HepG2 (cell line): ENCODE measurements at regions of chr6 and their contacts with region 1.

Region 1: DNA sequence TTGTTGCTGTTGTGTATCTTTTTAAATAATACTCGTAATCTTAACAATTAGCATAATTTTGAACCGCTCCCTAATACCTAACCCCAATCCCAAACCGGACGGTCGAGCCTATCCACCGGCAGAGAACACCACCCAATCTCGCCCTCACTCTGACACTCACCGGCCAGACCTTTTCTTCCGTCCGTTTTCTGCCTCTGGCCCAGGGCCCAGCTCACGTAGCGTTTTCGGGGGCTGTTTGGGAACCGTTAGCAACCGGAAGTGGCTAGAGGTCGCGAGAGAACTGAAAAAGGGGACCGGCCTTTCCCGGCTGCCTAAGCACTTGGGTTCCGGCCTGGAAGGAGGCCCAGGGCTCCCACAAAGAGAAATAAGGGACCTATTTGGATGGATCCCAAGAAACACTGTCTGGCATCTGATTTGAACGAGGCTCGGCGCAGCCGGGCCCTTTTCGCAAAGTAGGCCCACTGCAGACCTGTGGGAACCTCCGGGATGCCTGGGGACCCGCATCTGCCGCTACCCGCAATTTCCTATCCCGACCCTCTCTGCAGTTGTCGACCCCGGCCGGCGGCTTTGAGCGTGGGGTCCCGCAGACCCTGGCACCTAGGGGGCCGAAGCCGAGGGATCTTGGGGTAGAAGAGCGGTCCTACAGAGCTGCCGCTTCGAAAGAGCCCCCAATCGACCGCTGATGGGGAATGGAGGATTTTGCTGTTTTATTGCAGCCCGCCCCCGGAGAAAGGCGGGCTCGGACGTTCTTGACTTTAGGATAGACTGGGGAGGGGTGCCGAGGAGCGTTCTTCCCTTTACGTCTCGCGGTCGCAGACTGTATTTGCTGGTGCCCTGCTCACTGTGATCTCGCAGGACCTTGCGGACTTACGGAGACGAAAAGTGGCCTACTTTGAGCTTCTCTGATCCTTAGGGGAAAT is 4.8 kb upstream of the ZKSCAN8 start:
- DNase-seq: peak; percentile 94
- ATAC-seq: peak; percentile 84
- H3K4me3 ChIP-seq: peak overlapping the region; percentile 81 to 91 (median 86)
- H3K27ac ChIP-seq: peak overlapping the region; percentile 82
- H3K4me1 ChIP-seq: peaks cover 54% of the 10 kb centered on the region
- H3K27me3 ChIP-seq: no peaks in the 10 kb centered on the region; a peak in 1 of 5 replicates
- CTCF ChIP-seq: peak; percentile 37
- EP300 ChIP-seq: peak in 1 of 2 experiments; percentile 56; a peak in 3 of 4 replicates
- POLR2A ChIP-seq: peak; percentile 83 to 84
- RAD21 ChIP-seq: peak; percentile 63

Region 2: DNA sequence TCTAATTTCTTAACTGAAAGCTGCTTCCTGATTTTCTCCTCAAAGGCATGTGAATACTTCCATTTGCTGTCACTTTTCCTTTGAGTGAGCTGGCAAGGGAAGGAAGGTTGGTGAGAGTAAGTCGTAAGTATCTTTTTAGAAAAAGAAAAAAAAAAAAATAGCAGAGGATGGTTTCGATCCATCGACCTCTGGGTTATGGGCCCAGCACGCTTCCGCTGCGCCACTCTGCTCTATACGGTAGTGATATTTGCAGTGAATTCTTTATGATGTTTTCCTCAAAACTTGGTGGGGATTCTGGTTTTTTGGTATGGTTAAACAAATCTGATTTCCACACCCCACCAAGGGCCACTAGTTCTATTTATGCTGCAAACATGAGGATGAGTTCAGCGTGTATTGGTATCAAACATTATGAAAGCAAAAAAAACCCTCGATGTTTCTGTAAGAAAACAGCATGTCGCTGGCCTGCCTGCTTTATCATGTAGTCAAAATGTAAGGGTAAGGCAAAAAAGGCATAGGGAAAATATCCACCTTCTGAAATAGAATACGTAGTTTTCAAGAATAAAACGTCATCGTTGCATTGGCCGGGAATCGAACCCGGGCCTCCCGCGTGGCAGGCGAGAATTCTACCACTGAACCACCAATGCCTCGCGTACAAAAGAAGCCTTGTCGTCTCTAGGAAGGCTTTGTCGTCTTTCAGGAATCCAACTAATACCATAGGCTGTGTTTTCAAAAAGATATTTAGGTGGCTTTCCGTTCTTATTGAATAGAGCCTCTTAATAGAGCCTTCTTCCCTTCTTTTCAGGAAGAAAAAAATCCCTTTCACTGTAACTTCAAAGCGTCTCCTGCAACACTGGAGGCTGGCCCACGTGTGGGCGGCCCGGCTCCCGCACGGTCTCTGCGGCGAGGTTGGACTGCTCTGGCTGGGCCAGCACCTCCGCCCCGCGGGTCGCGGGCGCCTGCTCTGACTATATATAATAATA is 234.2 kb before region 1 on chr6:
- CTCF ChIA-PET with region 1: no interaction called
- POLR2A ChIA-PET with region 1: no interaction called
- in situ Hi-C with region 1: no loop called
- intact Hi-C with region 1: loop called (anchors 1 kb)
- DNase-seq: peak; percentile 85
- ATAC-seq: peak; percentile 95
- H3K4me3 ChIP-seq: peak overlapping the region; percentile 60 to 79 (median 69)
- H3K27ac ChIP-seq: peak overlapping the region; percentile 57
- H3K4me1 ChIP-seq: peaks cover 25% of the 10 kb centered on the region
- H3K27me3 ChIP-seq: no peaks in the 10 kb centered on the region
- CTCF ChIP-seq: no peak
- EP300 ChIP-seq: no peak
- POLR2A ChIP-seq: no peak
- RAD21 ChIP-seq: peak; percentile 49; the same call in 1 of the 2 replicates

Region 3: DNA sequence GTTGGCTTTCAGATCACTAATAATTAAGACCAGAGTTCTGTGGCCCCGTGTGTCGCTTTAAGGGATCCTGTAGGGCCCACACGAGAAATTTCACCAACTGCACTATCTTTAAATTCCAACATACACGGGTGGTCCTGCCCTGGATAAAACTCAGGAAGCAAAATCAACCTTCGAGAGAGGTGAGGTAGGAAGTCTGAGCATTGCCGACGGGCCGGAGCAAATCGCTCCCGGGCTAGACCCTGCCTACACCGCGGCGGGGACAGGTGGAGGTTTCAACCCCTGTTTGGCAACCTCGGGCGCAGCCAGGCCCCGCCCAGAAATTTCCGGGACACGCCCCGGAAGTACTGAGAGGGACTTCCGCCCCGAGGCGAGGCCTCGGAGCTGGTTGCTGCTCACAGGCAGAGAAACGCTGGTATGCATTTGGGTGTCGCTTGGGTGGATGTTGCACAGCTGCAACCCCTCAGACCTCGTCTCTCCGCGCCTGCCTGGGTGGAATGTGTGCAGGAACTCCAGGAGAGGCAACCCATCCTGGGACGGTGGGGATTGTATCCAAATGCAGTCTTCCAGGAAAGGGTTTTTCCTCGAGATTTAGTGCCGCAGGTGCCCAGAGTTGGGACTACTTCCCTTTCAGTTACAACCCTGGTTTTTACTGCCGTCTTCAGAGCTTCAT is 24.7 kb after region 1 on chr6:
- CTCF ChIA-PET with region 1: no interaction called
- POLR2A ChIA-PET with region 1: interaction called, 24 read pairs
- in situ Hi-C with region 1: no loop called
- intact Hi-C with region 1: no loop called
- DNase-seq: peak; percentile 79
- ATAC-seq: peak; percentile 98
- H3K4me3 ChIP-seq: peak overlapping the region; percentile 65 to 82 (median 74)
- H3K27ac ChIP-seq: peak overlapping the region; percentile 50
- H3K4me1 ChIP-seq: peaks cover 13% of the 10 kb centered on the region
- H3K27me3 ChIP-seq: no peaks in the 10 kb centered on the region; a peak in 1 of 5 replicates
- CTCF ChIP-seq: peak; percentile 13; the same call in 1 of the 2 replicates
- EP300 ChIP-seq: no peak
- POLR2A ChIP-seq: peak; percentile 92 to 99
- RAD21 ChIP-seq: peak; percentile 56

Region 4: GRCh38 chr6:28252009-28252975 is 115.4 kb after region 1 on chr6 and contains the start of gene ZKSCAN4:
- CTCF ChIA-PET with region 1: no interaction called
- POLR2A ChIA-PET with region 1: interaction called, 22 read pairs
- in situ Hi-C with region 1: loop called (anchors 5 kb)
- intact Hi-C with region 1: loop called (anchors 1 kb)
- DNase-seq: peak; percentile 88
- ATAC-seq: peak; percentile 94
- H3K4me3 ChIP-seq: peak within 1 kb of the TSS; percentile 85 to 98 (median 97)
- H3K27ac ChIP-seq: peak within 1 kb of the TSS; percentile 30
- H3K4me1 ChIP-seq: peaks cover 27% of the 10 kb centered on the region
- H3K27me3 ChIP-seq: no peaks in the 10 kb centered on the region; a peak in 1 of 5 replicates
- CTCF ChIP-seq: no peak
- EP300 ChIP-seq: peak in 1 of 2 experiments; percentile 56; a peak in 1 of 4 replicates
- POLR2A ChIP-seq: peak; percentile 42 to 74; a peak in 3 of 4 replicates
- RAD21 ChIP-seq: no peak; the same call in 1 of the 2 replicates
- total RNA-seq, gene ZKSCAN4: 7.8 and 10.2 TPM in 2 replicates

Region 5: DNA sequence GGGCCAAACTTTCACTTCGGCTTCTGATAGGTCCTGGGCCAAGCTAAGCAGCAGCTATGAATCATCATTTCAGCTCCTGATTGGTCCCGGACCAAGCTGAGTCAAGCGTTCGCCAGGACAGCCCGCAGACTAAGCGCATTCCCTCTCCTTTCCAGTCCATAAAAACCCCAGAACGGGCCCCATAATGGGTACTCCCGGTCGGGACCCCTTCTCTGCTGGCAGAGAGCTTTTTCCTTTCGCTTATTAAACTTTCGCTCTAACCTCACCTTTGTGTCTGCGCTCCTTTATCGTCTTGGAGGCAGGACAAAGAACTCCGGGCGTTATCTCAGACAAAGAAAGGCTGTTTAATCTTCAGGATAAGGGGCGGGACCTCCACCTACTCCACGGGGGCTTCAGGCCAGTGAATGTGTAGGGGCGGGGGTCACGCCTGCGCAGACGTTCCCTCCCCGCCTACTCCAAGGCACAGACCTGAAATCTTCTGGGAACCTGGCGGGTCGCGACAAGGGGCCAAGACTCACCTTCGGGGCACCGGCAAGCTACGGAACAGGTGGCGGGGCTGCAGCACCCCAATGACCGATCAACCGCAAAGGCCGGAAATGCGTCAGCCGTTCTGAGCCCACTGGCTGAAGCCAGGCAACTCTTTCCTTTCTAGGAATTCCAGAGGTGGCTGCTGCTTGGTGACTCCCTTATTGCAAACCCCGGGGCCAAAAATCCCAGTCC is 198.9 kb after region 1 on chr6 and contains the start of gene ZSCAN31:
- CTCF ChIA-PET with region 1: no interaction called
- POLR2A ChIA-PET with region 1: interaction called, 17 read pairs
- in situ Hi-C with region 1: no loop called
- intact Hi-C with region 1: no loop called
- DNase-seq: peak; percentile 99
- ATAC-seq: peak; percentile 98
- H3K4me3 ChIP-seq: peak within 1 kb of the TSS; percentile 78 to 94 (median 80)
- H3K27ac ChIP-seq: peak within 1 kb of the TSS; percentile 96
- H3K4me1 ChIP-seq: peaks cover 25% of the 10 kb centered on the region
- H3K27me3 ChIP-seq: no peaks in the 10 kb centered on the region; a peak in 1 of 5 replicates
- CTCF ChIP-seq: no peak; the same call in 1 of the 2 replicates
- EP300 ChIP-seq: peak; percentile 18 to 34; a peak in 1 of 4 replicates
- POLR2A ChIP-seq: peak; percentile 80 to 99
- RAD21 ChIP-seq: 0 out of 2 replicates have a peak, but pooled peaks have one; percentile 17
- total RNA-seq, gene ZSCAN31: 6.2 and 7.2 TPM in 2 replicates

Region 6: DNA sequence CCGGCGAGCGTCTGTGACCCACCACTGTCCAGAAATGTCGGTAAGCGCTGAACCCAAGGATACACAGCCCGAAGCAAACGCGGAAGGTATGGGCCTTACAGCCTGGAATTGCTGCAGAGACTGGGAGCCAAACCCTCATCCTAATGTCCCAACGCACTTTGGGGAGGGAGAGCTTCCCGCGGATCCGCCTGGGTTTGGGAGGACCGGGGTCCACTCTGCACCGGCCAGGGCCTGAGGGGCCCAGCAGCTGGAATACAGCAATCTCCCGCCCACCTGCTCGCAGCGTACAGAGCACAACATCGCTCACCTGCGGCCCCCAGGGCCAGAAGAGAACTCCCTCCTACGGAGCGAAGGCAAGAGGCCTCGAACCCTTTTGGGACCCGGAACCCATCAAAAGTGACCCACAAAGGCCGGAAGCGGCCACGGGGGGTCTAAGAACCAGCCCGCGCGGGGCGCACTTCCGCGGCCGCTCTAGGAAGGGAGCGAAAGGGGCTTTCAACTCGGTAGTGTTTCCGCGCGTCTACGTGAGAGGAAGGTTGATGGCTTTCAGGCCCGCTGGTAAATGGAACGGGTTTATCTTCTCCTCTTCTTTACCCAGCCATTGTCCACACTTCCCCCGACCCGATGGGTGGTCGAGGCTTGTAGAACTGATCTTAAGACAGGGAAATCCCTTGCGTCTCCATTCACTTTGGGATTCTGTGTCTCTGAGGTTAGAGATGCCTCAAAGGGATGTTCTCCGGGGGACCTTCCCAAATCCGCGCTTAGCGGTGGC is 262.7 kb after region 1 on chr6 and contains the start of gene ZSCAN12:
- CTCF ChIA-PET with region 1: no interaction called
- POLR2A ChIA-PET with region 1: interaction called, 10 read pairs
- in situ Hi-C with region 1: no loop called
- intact Hi-C with region 1: loop called (anchors 1 kb)
- DNase-seq: peak; percentile 86
- ATAC-seq: peak; percentile 98
- H3K4me3 ChIP-seq: peak within 1 kb of the TSS; percentile 82 to 99 (median 94)
- H3K27ac ChIP-seq: peak within 1 kb of the TSS; percentile 68
- H3K4me1 ChIP-seq: peaks cover 49% of the 10 kb centered on the region
- H3K27me3 ChIP-seq: no peaks in the 10 kb centered on the region; a peak in 1 of 5 replicates
- CTCF ChIP-seq: peak; percentile 94
- EP300 ChIP-seq: peak in 1 of 2 experiments; percentile 64; a peak in 3 of 4 replicates
- POLR2A ChIP-seq: peak; percentile 83 to 90
- RAD21 ChIP-seq: peak; percentile 67
- total RNA-seq, gene ZSCAN12: 8.9 and 9.8 TPM in 2 replicates